ENCODE measurements at regions of chr20 and their contacts with region 1.

Region 1: GRCh38 chr20:6767536-6768227 is at the start of gene BMP2:
- DNase-seq: peak; percentile 50
- ATAC-seq: peak; percentile 82
- H3K4me3 ChIP-seq: peak within 1 kb of the TSS; percentile 77
- H3K27ac ChIP-seq: peak within 1 kb of the TSS; percentile 14; the same call in 1 of the 2 replicates
- H3K4me1 ChIP-seq: no peaks in the 10 kb centered on the region
- H3K27me3 ChIP-seq: peaks cover 16% of the 10 kb centered on the region
- CTCF ChIP-seq: no peak
- POLR2A ChIP-seq: no peak
- RAD21 ChIP-seq: no peak
- total RNA-seq, gene BMP2: 0.18 and 0.28 TPM in 2 replicates

Region 2: DNA sequence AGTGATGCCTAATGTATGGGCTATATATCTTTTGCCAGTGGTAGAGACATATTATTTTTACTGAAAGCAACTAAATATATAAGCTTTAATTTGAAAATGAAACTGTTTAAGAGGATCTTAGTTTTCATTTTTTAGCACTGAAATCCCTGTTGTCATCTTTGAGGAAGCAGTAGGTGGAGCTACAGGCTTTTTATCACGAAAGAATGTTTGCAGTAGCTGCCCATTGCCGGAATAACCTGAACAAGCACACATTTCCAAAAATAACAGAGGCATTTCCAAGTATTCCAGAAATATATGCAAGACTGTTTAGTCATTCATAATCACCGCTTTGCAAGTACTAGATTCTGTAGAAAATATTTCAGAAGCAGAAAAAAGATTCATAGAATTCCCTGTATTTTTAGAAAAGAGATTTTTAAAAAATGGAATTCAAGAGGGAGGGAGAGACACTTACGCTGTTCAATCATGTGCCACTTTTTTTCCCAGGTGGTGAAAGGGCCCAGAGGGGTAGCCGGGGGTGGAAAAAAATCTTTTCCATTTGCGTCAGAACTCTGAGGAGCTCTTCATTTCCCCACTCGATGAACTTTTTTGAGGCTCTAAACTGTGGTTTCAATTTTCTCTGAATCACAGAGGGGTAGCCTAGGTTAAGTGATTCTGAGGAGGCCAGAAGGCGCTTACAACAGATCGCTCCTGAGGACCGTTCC is 502.3 kb before region 1 on chr20:
- CTCF ChIA-PET with region 1: interaction called, 4 read pairs
- POLR2A ChIA-PET with region 1: no interaction called
- dilution Hi-C with region 1: no loop called
- in situ Hi-C with region 1: no loop called
- intact Hi-C with region 1: loop called (anchors 1 kb)
- DNase-seq: peak; percentile 73
- ATAC-seq: peak; percentile 92
- H3K4me3 ChIP-seq: no peak overlapping the region
- H3K27ac ChIP-seq: no peak overlapping the region
- H3K4me1 ChIP-seq: no peaks in the 10 kb centered on the region
- H3K27me3 ChIP-seq: no peaks in the 10 kb centered on the region; the same call in 1 of the 2 replicates
- CTCF ChIP-seq: peak; percentile 67
- POLR2A ChIP-seq: no peak
- RAD21 ChIP-seq: peak; percentile 71

Region 3: DNA sequence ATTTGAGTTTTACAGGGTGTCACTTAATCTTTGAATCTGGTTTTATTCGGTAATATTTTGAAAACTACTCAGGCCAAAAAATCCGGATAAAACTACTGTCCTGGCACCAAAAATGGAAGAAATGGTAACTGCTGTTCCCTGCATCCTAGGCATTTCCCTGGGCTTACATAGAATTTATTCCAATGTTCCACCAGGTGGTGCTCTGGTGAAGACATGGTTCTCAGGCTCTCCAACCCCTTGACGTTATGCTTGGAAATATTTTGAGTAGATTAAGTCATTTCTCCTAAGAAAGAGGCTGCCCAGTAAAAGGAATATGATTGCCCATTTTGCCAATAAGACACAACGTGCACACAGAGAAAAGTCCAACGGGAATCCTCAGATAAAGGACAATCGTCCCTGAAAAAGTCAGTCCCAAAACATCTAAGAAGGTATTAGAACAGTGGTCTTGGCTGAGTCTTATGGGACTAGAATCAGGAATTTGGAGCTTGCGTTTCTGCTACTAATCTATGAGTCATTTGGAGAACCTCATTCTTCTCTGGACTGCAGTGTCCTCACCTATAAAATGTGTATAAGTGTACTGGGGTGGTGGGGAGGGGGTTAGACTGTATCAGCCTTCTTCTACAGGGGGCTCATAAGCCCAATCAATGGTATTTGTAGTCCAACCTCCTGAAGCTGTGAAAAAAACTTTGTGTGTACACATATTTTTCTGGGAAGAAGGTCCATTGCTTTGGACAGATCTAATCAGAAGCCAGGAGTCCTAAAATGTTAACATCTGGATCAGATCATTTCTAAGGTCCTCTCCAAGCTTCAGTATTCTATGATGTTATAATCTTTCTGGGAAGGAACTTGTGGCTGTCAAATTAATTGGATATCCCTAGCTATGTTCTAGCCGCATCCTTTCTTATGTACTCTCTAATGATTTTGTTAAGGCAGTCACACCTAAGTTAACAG is 131.2 kb before region 1 on chr20:
- CTCF ChIA-PET with region 1: no interaction called
- POLR2A ChIA-PET with region 1: no interaction called
- dilution Hi-C with region 1: no loop called
- in situ Hi-C with region 1: no loop called
- intact Hi-C with region 1: loop called (anchors 2 kb)
- DNase-seq: peak; percentile 69
- ATAC-seq: peak; percentile 87
- H3K4me3 ChIP-seq: no peak overlapping the region
- H3K27ac ChIP-seq: no peak overlapping the region
- H3K4me1 ChIP-seq: no peaks in the 10 kb centered on the region
- H3K27me3 ChIP-seq: peaks cover 8% of the 10 kb centered on the region
- CTCF ChIP-seq: peak; percentile 66
- POLR2A ChIP-seq: no peak
- RAD21 ChIP-seq: peak; percentile 64

Region 4: DNA sequence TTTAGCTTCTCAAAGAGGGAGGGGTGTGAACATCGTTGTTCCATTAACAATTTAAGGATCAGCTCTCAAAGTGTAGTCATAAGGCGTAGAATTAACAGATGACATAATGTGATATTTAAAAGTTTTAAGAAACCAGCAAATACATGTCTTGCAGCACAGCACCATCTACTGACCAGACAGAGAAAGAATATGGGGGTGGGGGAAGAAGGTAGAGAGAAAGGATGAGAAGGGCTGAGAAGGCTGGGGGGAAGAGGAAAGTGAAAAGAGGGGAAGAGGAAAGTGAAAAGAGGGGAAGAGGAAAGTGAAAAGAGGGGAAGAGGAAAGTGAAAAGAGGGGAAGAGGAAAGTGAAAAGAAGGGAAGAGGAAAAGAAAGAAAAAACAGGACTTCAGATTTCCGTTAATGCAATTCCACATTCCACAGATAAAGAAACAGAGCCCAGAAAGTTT is 1091.7 kb after region 1 on chr20:
- CTCF ChIA-PET with region 1: interaction called, 3 read pairs
- POLR2A ChIA-PET with region 1: no interaction called
- dilution Hi-C with region 1: no loop called
- in situ Hi-C with region 1: no loop called
- intact Hi-C with region 1: loop called (anchors 1 kb)
- DNase-seq: peak; percentile 70
- ATAC-seq: peak; percentile 94
- H3K4me3 ChIP-seq: no peak overlapping the region
- H3K27ac ChIP-seq: no peak overlapping the region
- H3K4me1 ChIP-seq: no peaks in the 10 kb centered on the region; the same call in 1 of the 2 replicates
- H3K27me3 ChIP-seq: peaks cover 3% of the 10 kb centered on the region; the same call in 1 of the 2 replicates
- CTCF ChIP-seq: peak; percentile 90
- POLR2A ChIP-seq: 0 out of 2 replicates have a peak, but pooled peaks have one; percentile 28
- RAD21 ChIP-seq: peak; percentile 86